ENCODE measurements at regions of chr1 and their contacts with region 1.

Region 1: DNA sequence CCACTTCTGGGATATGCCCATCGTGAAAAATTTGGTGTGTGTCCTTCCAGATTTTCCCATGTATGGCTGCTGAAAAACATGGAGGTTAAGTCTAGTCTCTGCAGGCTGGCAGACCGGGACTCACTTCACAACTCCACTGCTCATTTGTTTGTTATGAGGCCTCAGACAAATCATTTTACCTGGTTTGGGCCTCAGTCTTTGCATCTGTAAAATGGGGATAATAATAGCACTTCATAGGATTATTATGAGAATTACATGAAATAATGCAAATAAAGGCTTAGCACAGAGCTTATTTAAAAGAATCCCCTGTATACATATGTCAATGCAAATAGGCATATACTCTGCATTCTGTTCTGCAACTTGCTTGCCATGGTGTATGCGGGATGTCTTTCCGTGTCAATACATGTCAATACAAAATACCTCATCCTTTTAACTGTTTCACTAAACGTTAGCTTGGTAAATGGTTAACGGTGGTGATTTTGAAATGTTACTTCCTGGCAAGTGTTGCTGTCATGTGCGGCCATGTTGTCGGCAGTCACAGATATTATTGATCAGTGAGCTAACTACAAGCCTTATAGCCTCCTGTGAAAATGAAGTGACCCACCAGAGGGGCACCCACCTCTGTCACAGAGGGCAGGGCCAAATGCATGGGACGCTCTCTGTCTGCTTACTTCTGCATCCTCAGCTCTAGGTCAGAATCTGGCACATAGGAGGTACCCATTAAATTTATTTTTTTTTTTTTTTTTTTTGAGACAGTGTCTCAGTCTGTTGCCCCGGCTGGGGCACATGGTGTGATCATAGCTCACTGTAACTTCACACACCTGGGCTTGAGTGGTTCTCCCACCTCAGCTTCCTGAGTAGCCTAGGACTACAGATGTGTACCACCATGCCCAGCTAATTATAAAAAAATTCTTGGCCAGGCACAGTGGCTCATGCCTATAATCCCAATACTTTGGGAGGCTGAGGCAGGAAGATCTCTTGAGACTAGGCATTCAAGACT is 4.3 kb downstream of the LCK start:
- DNase-seq: peak; percentile 60
- ATAC-seq: peak; percentile 4
- H3K4me3 Mint-ChIP-seq: peak overlapping the region; percentile 99
- H3K27ac Mint-ChIP-seq: peak overlapping the region; percentile 85
- H3K4me1 Mint-ChIP-seq: peaks cover 43% of the 10 kb centered on the region
- H3K27me3 Mint-ChIP-seq: no peaks in the 10 kb centered on the region

Region 2: DNA sequence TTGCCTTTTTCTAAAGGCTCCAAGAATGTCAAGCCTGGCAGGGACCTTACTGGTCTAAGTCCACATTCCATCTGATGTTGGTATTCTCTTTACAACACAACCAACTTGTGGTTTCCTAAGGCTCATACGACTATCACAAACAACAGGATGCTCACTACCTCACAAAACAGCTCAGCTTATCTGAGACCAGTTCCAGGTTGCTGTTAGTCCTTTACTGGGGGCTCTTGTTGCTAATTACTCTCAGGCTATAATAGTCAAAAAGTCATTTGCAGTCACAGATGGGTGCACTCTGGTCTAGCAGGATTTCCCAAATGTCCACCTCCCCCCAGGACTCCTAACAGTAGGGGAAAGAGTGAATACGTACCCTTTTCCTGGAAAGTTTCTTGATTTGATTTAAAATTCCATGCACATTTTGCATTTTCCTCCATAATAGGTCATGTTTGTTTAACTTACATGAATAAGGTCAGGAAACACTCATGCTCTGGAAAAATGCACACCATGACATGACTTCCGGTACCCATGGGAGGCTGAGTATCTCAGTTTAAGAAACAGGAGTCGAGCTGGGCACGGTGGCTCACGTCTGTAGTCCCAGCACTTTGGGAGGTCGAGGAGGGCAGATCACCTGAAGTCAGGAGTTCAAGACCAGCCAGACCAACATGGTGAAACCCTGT is 11.7 kb after region 1 on chr1:
- CTCF ChIA-PET with region 1: interaction called, 19 read pairs
- POLR2A ChIA-PET with region 1: interaction called, 137 read pairs
- DNase-seq: no peak
- ATAC-seq: peak; percentile 35
- H3K4me3 Mint-ChIP-seq: peak overlapping the region; percentile 66
- H3K27ac Mint-ChIP-seq: peak overlapping the region; percentile 93
- H3K4me1 Mint-ChIP-seq: peaks cover 66% of the 10 kb centered on the region
- H3K27me3 Mint-ChIP-seq: no peaks in the 10 kb centered on the region

Region 3: DNA sequence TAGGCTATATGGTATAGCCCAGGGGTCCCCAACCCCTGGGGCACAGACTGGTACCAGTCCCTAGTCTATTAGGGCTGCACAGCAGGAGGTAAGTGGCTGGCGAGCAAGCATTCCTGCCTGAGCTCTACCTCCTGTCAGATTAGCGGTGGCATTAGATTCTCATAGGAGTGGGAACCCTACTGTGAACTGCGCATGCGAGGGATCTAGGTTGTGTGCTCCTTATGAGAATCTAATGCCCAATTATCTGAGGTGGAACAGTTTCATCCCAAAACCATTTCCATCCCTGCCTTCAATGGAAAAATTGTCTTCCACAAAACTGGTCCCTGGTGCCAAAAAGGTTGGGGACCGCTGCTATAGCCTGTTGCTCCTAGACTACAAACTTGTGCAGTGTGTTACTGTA is 261.0 kb after region 1 on chr1:
- CTCF ChIA-PET with region 1: no interaction called
- POLR2A ChIA-PET with region 1: no interaction called
- DNase-seq: no peak
- ATAC-seq: no peak
- H3K4me3 Mint-ChIP-seq: no peak overlapping the region
- H3K27ac Mint-ChIP-seq: no peak overlapping the region
- H3K4me1 Mint-ChIP-seq: peaks cover 1% of the 10 kb centered on the region
- H3K27me3 Mint-ChIP-seq: peaks cover 10% of the 10 kb centered on the region

Measured in activated CD8-positive, alpha-beta T cell treated with anti-CD3 and anti-CD28 coated beads, Interleukin-2, amount 10 ng/mL, durations not matched to agents 7 days and 5 days (primary cell).